Activated B cell treated with CpG ODN at 0.5 μM for 24 hours (primary cell): ENCODE measurements at regions of chr1 and their contacts with region 1.

Region 1: DNA sequence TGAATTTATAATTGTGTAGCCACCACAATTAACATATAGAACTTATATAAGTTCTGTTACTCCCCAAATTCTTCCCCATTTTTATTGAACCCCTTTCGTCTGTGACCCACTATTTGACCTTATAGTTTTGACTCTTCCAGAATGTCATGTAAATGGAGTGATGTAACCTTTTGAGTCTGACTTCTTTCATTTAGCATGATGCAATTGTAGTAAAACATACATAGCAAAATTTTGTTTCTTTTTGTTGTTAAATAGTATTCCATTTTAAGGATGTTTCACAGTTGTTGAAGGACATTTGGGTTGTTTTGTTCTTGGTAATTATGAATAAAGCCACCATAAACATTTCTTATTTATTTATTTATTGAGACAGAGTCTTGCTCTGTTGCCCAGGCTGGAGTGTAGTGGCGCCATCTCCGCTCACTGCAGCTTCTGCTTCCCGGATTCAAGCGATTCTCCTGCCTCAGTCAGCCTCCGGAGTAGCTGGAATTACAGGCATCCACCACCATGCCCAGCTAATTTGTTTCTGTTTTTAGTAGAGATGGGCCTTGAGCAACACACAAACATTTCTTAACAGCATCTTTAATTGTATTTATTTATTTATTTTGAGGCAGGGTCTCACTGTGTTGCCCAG is 33.6 kb downstream of the RPRD2 start:
- DNase-seq: no peak
- ATAC-seq: no peak
- H3K4me3 Mint-ChIP-seq: no peak overlapping the region
- H3K27ac Mint-ChIP-seq: no peak overlapping the region
- H3K4me1 Mint-ChIP-seq: peaks cover 18% of the 10 kb centered on the region
- H3K27me3 Mint-ChIP-seq: no peaks in the 10 kb centered on the region
- CTCF ChIP-seq: no peak

Region 2: DNA sequence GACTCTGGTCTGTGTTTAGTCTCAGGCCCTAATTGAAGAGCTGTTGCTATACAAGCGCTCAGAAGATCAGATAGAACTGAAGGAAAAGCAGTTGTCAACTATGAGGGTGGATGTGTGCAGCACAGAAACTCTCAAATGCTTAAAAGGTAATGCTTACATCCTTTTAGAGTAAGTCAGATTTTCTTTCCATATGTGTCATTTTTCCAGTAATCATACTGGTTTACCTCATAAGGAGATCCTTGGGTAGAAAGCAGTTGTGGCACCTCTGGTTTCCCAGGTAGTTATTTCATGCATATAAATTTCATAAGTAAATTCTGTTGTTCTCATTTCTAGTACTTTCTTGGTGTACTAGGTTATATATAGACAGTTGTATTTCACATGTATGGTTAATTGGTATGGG is 46.7 kb after region 1 on chr1:
- CTCF ChIA-PET with region 1: no interaction called
- POLR2A ChIA-PET with region 1: no interaction called
- intact Hi-C with region 1: loop called (anchors 5 kb)
- DNase-seq: no peak
- ATAC-seq: no peak
- H3K4me3 Mint-ChIP-seq: no peak overlapping the region
- H3K27ac Mint-ChIP-seq: no peak overlapping the region
- H3K4me1 Mint-ChIP-seq: no peaks in the 10 kb centered on the region
- H3K27me3 Mint-ChIP-seq: no peaks in the 10 kb centered on the region
- CTCF ChIP-seq: no peak